Dendritic cell treated with granulocyte-macrophage colony-stimulating factor and Interleukin-4, amounts not matched to agents 40 ng/mL and 50 ng/mL, for 4 days (primary cell): ENCODE measurements at regions of chr18 and their contacts with region 1.

Region 1: GRCh38 chr18:35376742-35377695 is at the start of gene ZNF396:
- H3K4me3 Mint-ChIP-seq: peak within 1 kb of the TSS; percentile 79
- H3K27ac Mint-ChIP-seq: peak within 1 kb of the TSS; percentile 60
- H3K4me1 Mint-ChIP-seq: peaks cover 12% of the 10 kb centered on the region
- H3K27me3 Mint-ChIP-seq: peaks cover 13% of the 10 kb centered on the region

Region 2: GRCh38 chr18:35290073-35290735 is 86.8 kb before region 1 on chr18 and contains the start of gene ZSCAN30:
- intact Hi-C with region 1: loop called (anchors 1 kb)
- H3K4me3 Mint-ChIP-seq: peak within 1 kb of the TSS; percentile 96
- H3K27ac Mint-ChIP-seq: peak within 1 kb of the TSS; percentile 90
- H3K4me1 Mint-ChIP-seq: peaks cover 26% of the 10 kb centered on the region
- H3K27me3 Mint-ChIP-seq: no peaks in the 10 kb centered on the region

Region 3: GRCh38 chr18:35331367-35332310 is 45.4 kb before region 1 on chr18:
- intact Hi-C with region 1: no loop called
- H3K4me3 Mint-ChIP-seq: no peak overlapping the region
- H3K27ac Mint-ChIP-seq: no peak overlapping the region
- H3K4me1 Mint-ChIP-seq: peaks cover 4% of the 10 kb centered on the region
- H3K27me3 Mint-ChIP-seq: no peaks in the 10 kb centered on the region

Region 4: DNA sequence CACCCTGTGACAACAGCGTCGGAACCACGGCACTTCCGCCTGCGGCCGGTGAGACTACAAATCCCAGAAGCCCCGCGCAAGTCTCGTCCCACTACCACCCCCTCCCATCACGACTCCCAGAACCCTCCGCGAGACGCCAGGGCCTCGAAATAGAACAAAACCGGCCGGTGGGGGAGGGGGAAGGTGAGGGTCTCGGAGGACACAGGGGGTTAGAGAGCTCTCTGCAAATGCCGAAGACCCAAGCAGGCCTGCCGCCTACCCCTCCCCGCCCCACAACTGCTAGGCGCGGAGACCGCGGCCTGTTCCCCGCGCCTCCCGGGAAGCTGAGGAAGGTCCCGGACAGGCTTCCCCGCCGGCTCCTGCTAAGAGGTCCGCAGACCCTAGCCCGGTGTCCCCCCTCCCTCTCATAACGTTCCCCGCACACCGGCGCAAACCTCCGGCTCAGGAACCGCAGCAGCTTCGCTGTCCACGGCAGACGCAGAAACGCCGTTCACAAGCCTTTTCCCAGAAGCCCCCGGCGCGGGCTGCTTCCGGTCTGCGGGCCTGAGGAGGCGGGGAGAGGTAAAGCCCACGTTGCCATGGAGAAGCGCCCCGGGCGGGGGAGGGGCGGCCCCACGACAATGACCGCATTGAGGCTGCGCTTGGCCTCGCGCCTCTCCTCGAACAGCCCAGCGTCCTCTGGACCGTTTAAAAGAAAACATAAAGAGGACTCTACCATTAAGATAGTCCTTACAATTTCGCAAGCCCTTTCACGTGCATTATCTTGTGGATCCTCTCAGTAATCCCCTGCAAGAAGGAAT is 32.9 kb before region 1 on chr18 and contains the start of gene ZNF24:
- intact Hi-C with region 1: loop called (anchors 1 kb)
- H3K4me3 Mint-ChIP-seq: peak within 1 kb of the TSS; percentile 93
- H3K27ac Mint-ChIP-seq: peak within 1 kb of the TSS; percentile 89
- H3K4me1 Mint-ChIP-seq: peaks cover 49% of the 10 kb centered on the region
- H3K27me3 Mint-ChIP-seq: no peaks in the 10 kb centered on the region

Region 5: DNA sequence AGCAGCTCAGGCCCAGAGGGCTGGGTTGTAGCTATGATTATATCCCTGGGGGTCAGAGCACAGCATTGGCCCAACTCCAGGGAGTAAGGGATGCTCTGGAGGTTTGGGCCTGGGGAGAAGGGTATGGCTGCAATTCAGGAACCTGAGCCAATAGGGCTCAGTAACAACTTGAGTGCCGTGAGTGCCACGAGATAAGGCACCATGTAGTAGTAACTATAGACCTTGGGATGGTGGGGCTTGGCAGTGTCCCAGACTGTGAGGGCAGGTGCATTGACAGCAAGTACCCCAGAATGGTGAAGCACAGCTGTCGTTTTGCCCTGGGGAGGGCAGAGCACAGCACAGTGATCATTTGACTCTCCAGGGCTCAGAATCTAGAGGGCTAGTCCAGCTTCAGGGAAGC is 45.2 kb after region 1 on chr18:
- intact Hi-C with region 1: no loop called
- H3K4me3 Mint-ChIP-seq: no peak overlapping the region
- H3K27ac Mint-ChIP-seq: no peak overlapping the region
- H3K4me1 Mint-ChIP-seq: no peaks in the 10 kb centered on the region
- H3K27me3 Mint-ChIP-seq: peaks cover 3% of the 10 kb centered on the region

Region 6: DNA sequence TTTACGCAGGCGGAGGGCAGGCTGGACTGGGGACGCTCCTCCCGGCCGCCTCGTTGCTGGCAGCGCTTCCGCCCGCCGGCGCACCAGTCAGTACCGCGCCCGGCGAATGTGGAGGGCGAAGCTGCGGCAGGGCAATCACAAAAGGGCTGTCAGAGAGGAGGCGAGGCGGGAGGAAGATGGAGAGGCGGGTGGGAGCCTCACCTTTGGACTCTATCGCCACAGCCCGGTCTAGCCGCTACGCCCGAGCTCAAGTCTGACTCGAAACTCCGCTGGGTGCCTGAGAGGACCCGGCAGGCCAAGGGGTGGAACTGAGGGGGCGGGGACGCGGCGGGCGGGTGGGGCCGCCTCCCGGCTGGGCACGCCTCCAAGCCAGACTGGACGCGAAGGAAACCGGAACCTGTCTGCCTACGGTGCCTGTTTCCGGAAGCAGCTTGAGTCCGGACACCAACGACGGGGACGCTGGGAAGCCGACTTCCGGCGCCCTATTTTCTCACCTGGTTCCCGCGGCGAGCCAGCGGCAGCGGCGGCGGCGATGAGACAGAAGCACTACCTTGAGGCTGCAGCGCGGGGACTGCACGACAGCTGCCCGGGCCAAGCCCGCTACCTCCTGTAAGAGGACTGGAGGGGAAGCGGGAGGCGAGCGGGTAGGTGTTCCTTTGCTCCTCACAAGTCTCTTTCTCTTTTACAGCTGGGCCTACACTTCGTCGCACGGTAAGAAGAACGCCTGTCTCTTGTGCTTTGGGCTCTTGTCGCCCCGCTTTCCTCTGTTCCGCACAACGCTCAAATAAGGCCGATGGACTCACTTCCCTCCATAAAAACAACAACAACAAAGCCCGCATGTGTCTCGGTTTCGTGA is 595.4 kb after region 1 on chr18 and contains the start of gene RMP24:
- intact Hi-C with region 1: loop called (anchors 5 kb)
- H3K4me3 Mint-ChIP-seq: peak within 1 kb of the TSS; percentile 98
- H3K27ac Mint-ChIP-seq: peak within 1 kb of the TSS; percentile 98
- H3K4me1 Mint-ChIP-seq: peaks cover 41% of the 10 kb centered on the region
- H3K27me3 Mint-ChIP-seq: no peaks in the 10 kb centered on the region